Caco-2 (cell line): ENCODE measurements at regions of chr17 and their contacts with region 1.

Region 1: DNA sequence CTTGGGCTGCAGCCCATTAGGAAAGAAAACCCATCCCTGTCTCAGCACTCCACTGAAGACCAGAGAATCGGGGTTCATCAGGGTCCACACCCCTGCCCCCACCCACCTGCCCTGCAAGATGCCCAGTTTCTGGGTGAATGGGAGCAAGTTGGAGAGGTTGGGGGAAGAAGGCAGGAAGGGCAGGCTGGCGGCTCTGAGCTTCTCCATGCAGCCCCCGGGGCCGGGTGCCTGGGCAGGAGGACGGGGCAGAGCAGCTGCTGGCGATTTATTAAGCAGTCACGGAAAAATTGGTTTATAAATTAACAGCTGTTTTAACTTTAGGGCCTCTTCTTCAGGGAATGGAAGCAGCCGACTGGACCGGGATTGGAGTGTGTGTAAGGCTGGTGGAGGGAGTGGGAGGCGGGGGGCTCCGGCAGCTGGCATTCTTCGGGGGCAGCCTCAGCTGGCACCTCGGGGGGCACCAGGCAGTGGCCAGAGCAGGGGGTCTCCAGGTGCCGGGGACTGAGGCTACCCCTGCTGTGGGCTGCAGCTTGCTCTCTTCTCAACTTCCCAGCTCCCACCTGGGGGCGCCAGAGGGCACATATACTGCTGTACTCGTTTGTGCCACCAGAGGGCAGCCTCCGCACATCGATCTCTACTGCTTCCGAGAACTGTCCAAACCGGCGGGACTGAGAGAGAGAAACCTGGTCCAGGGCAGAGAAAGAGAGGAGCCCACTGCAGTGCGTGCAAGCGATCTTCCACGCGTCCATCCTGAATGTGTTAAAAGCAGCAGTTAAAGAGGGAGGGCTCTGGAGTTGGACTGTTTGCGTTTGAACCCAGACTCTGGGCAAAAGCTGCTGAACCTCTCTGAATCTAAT is 5.0 kb upstream of the PPP1R1B start:
- DNase-seq: peak; percentile 82 to 92
- H3K4me3 ChIP-seq: no peak overlapping the region
- H3K4me3 Mint-ChIP-seq: no peak overlapping the region
- H3K27ac Mint-ChIP-seq: no peak overlapping the region
- H3K4me1 ChIP-seq: peaks cover 14% of the 10 kb centered on the region; the same call in 1 of the 2 replicates
- H3K4me1 Mint-ChIP-seq: no peaks in the 10 kb centered on the region
- H3K27me3 ChIP-seq: 0 out of 2 replicates have a peak, but pooled peaks cover 4% of the 10 kb centered on the region
- H3K27me3 Mint-ChIP-seq: peaks cover 12% of the 10 kb centered on the region
- CTCF ChIP-seq: peak; percentile 100

Region 2: GRCh38 chr17:39401412-39402243 is 220.1 kb before region 1 on chr17 and contains the start of gene FBXL20:
- CTCF ChIA-PET with region 1: interaction called, 10 read pairs
- POLR2A ChIA-PET with region 1: no interaction called
- intact Hi-C with region 1: no loop called
- DNase-seq: peak; percentile 93
- H3K4me3 ChIP-seq: peak within 1 kb of the TSS; percentile 100
- H3K4me3 Mint-ChIP-seq: peak within 1 kb of the TSS; percentile 99
- H3K27ac Mint-ChIP-seq: peak within 1 kb of the TSS; percentile 81
- H3K4me1 ChIP-seq: peaks cover 10% of the 10 kb centered on the region; the same call in 1 of the 2 replicates
- H3K4me1 Mint-ChIP-seq: peaks cover 12% of the 10 kb centered on the region
- H3K27me3 ChIP-seq: no peaks in the 10 kb centered on the region
- H3K27me3 Mint-ChIP-seq: no peaks in the 10 kb centered on the region
- CTCF ChIP-seq: no peak
- total RNA-seq, gene FBXL20: 11.2 and 12.6 TPM in 2 replicates

Region 3: DNA sequence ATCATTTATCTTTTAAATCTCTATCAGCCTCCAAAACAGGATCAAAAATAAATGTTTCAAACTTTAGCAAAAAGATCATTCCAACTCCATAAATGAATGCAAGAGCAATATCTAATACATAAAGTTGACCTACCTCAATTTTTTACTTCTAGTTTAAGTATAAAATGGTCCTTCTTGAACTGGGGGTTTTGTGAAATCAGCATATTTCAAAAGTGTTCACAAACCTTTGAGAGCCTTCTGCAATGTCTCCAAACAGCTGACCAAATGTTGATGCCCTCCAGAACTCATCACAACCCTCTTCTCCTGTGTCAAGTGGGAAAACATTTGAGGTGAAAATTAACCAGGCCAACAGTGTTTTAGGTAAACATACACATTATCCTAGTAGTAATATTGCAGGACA is 178.4 kb before region 1 on chr17:
- CTCF ChIA-PET with region 1: no interaction called
- POLR2A ChIA-PET with region 1: no interaction called
- intact Hi-C with region 1: no loop called
- DNase-seq: no peak
- H3K4me3 ChIP-seq: no peak overlapping the region
- H3K4me3 Mint-ChIP-seq: no peak overlapping the region
- H3K27ac Mint-ChIP-seq: no peak overlapping the region
- H3K4me1 ChIP-seq: no peaks in the 10 kb centered on the region
- H3K4me1 Mint-ChIP-seq: no peaks in the 10 kb centered on the region
- H3K27me3 ChIP-seq: no peaks in the 10 kb centered on the region
- H3K27me3 Mint-ChIP-seq: no peaks in the 10 kb centered on the region
- CTCF ChIP-seq: no peak

Region 4: GRCh38 chr17:39582658-39583057 is 39.1 kb before region 1 on chr17:
- CTCF ChIA-PET with region 1: interaction called, 11 read pairs
- POLR2A ChIA-PET with region 1: no interaction called
- intact Hi-C with region 1: no loop called
- DNase-seq: no peak
- H3K4me3 ChIP-seq: no peak overlapping the region
- H3K4me3 Mint-ChIP-seq: no peak overlapping the region
- H3K27ac Mint-ChIP-seq: no peak overlapping the region
- H3K4me1 ChIP-seq: no peaks in the 10 kb centered on the region
- H3K4me1 Mint-ChIP-seq: no peaks in the 10 kb centered on the region
- H3K27me3 ChIP-seq: no peaks in the 10 kb centered on the region
- H3K27me3 Mint-ChIP-seq: peaks cover 10% of the 10 kb centered on the region
- CTCF ChIP-seq: no peak

Region 5: DNA sequence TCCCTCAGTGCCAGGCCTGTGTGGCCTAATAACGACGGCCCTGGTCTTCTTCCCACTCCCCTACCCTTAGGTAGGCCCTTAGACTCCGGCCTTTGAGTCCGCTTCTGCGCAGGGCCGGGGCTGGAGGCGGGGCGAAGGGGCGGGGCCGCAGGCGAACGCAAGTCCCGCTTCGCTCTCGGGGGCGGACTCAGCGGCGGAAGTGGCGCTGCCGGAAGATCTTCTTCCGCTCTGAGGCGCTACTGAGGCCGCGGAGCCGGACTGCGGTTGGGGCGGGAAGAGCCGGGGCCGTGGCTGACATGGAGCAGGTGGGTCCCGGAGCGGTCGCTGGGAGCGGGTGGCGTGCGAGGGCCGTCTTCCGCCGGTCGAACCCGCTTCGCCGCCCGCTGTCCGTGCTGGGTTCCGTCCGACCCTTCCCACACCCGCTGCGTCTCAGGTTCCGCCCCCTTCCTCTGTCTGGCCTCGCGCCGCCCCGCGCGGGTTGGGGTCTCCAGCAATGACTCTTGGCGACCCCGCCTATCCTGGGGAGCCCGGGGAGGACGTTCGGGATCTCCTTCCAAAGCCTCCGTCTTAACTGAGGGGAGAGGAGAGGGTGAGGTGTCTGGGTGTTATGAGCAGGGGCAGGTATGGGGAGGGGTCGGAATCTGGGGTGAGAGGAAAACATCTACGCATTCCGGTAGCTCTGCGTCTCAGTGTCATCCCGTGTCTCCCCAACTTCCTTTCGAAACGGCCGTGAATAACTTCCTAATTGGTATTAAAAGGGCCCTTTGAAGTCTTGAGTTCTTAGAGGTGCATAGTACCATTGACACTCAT is 15.4 kb after region 1 on chr17 and contains the start of gene STARD3:
- CTCF ChIA-PET with region 1: interaction called, 27 read pairs
- POLR2A ChIA-PET with region 1: no interaction called
- intact Hi-C with region 1: no loop called
- DNase-seq: peak; percentile 90 to 92
- H3K4me3 ChIP-seq: peak within 1 kb of the TSS; percentile 79
- H3K4me3 Mint-ChIP-seq: peak within 1 kb of the TSS; percentile 90
- H3K27ac Mint-ChIP-seq: peak within 1 kb of the TSS; percentile 58
- H3K4me1 ChIP-seq: peaks cover 5% of the 10 kb centered on the region
- H3K4me1 Mint-ChIP-seq: peaks cover 11% of the 10 kb centered on the region
- H3K27me3 ChIP-seq: no peaks in the 10 kb centered on the region
- H3K27me3 Mint-ChIP-seq: no peaks in the 10 kb centered on the region
- CTCF ChIP-seq: peak in 1 of 2 experiments; percentile 25
- total RNA-seq, gene STARD3: 42.6 and 55.5 TPM in 2 replicates

Region 6: DNA sequence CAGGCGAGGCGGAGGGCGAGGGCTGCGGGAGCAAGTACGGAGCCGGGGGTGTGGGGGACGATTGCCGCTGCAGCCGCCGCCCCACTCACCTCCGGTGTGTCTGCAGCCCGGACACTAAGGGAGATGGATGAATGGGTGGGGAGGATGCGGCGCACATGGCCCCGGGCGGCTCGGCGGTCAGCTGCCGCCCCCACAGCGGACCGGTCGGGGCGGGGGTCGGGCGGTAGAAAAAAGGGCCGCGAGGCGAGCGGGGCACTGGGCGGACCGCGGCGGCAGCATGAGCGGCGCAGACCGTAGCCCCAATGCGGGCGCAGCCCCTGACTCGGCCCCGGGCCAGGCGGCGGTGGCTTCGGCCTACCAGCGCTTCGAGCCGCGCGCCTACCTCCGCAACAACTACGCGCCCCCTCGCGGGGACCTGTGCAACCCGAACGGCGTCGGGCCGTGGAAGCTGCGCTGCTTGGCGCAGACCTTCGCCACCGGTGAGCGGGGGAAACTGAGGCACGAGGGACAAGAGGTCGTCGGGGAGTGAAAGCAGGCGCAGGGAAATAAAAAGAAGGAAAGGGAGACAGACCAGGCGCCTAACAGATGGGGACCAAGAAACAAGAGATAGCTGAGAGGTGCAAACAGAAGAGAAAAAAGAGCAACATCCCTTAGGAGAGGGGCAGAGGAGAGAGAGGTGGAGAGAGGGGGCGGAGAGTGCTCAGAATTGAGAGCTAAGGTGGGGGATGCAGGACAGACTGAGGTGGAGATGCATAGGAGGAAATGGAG is 46.6 kb after region 1 on chr17 and contains the start of gene PNMT:
- CTCF ChIA-PET with region 1: interaction called, 44 read pairs
- POLR2A ChIA-PET with region 1: no interaction called
- intact Hi-C with region 1: loop called (anchors 1 kb)
- DNase-seq: peak; percentile 73 to 85
- H3K4me3 ChIP-seq: peak within 1 kb of the TSS; percentile 32
- H3K4me3 Mint-ChIP-seq: peak within 1 kb of the TSS; percentile 3
- H3K27ac Mint-ChIP-seq: no peak within 1 kb of the TSS
- H3K4me1 ChIP-seq: peaks cover 7% of the 10 kb centered on the region; the same call in 1 of the 2 replicates
- H3K4me1 Mint-ChIP-seq: peaks cover 6% of the 10 kb centered on the region
- H3K27me3 ChIP-seq: no peaks in the 10 kb centered on the region
- H3K27me3 Mint-ChIP-seq: peaks cover 4% of the 10 kb centered on the region
- CTCF ChIP-seq: peak; percentile 68 to 79
- total RNA-seq, gene PNMT: not detected in 2 replicates

Region 7: DNA sequence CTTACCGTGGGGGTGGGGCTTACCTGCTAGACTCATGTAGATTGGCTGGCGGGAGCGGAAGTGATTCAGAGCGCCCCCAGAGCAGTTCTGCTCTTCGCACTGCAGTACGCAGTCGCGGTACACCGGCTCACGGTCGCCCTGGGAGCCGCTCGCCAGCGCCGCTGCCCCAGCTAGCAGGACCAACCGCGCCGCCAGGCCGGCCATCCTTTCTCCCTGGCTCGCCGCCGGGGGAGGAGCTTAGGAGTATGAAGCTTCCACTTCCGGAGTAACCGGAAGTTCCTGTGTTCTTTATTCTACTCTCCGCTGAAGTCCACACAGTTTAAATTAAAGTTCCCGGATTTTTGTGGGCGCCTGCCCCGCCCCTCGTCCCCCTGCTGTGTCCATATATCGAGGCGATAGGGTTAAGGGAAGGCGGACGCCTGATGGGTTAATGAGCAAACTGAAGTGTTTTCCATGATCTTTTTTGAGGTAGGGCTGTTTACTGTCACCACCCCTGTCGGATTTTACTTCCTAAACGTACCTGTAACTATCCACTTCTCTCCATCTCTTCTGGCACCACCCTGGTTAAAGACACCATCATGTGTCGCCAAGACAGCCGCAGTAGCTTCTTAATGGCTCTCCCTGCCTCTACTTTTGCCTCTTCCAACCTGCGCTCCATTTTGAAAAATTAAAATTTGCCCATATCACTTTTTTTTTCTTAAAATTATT is 66.2 kb after region 1 on chr17 and contains the start of gene PGAP3:
- CTCF ChIA-PET with region 1: interaction called, 13 read pairs
- POLR2A ChIA-PET with region 1: no interaction called
- intact Hi-C with region 1: no loop called
- DNase-seq: peak; percentile 95 to 96
- H3K4me3 ChIP-seq: peak within 1 kb of the TSS; percentile 74
- H3K4me3 Mint-ChIP-seq: peak within 1 kb of the TSS; percentile 80
- H3K27ac Mint-ChIP-seq: peak within 1 kb of the TSS; percentile 73
- H3K4me1 ChIP-seq: peaks cover 20% of the 10 kb centered on the region
- H3K4me1 Mint-ChIP-seq: peaks cover 11% of the 10 kb centered on the region
- H3K27me3 ChIP-seq: no peaks in the 10 kb centered on the region
- H3K27me3 Mint-ChIP-seq: no peaks in the 10 kb centered on the region
- CTCF ChIP-seq: no peak
- total RNA-seq, gene PGAP3: 14.7 and 17.4 TPM in 2 replicates

Region 8: GRCh38 chr17:39730095-39730921 is 108.6 kb after region 1 on chr17 and contains the start of gene MIEN1:
- CTCF ChIA-PET with region 1: interaction called, 29 read pairs
- POLR2A ChIA-PET with region 1: interaction called, 3 read pairs
- intact Hi-C with region 1: no loop called
- DNase-seq: peak; percentile 92 to 98
- H3K4me3 ChIP-seq: peak within 1 kb of the TSS; percentile 57
- H3K4me3 Mint-ChIP-seq: peak within 1 kb of the TSS; percentile 84
- H3K27ac Mint-ChIP-seq: peak within 1 kb of the TSS; percentile 91
- H3K4me1 ChIP-seq: peaks cover 11% of the 10 kb centered on the region
- H3K4me1 Mint-ChIP-seq: no peaks in the 10 kb centered on the region
- H3K27me3 ChIP-seq: no peaks in the 10 kb centered on the region
- H3K27me3 Mint-ChIP-seq: no peaks in the 10 kb centered on the region
- CTCF ChIP-seq: peak; percentile 74 to 95
- total RNA-seq, gene MIEN1: 42.9 and 46.3 TPM in 2 replicates

Region 9: GRCh38 chr17:40490289-40490853 is 868.6 kb after region 1 on chr17:
- CTCF ChIA-PET with region 1: no interaction called
- POLR2A ChIA-PET with region 1: no interaction called
- intact Hi-C with region 1: no loop called
- DNase-seq: no peak
- H3K4me3 ChIP-seq: no peak overlapping the region
- H3K4me3 Mint-ChIP-seq: no peak overlapping the region
- H3K27ac Mint-ChIP-seq: no peak overlapping the region
- H3K4me1 ChIP-seq: no peaks in the 10 kb centered on the region
- H3K4me1 Mint-ChIP-seq: peaks cover 22% of the 10 kb centered on the region
- H3K27me3 ChIP-seq: no peaks in the 10 kb centered on the region
- H3K27me3 Mint-ChIP-seq: no peaks in the 10 kb centered on the region
- CTCF ChIP-seq: no peak